ENCODE measurements at regions of chr7 and their contacts with region 1.

Region 1: GRCh38 chr7:134432296-134433152 is 26.4 kb downstream of the AKR1B1 start:
- DNase-seq: peak; percentile 99 to 100
- ATAC-seq: peak; percentile 92 to 96
- H3K4me3 ChIP-seq: peak overlapping the region; percentile 46
- H3K27ac ChIP-seq: peak overlapping the region; percentile 79 to 88
- H3K4me1 ChIP-seq: peaks cover 30% of the 10 kb centered on the region
- CTCF ChIP-seq: peak; percentile 100
- EP300 ChIP-seq: no peak
- POLR2A ChIP-seq: no peak; the same call in 1 of the 2 replicates
- RAD21 ChIP-seq: peak; percentile 100

Region 2: DNA sequence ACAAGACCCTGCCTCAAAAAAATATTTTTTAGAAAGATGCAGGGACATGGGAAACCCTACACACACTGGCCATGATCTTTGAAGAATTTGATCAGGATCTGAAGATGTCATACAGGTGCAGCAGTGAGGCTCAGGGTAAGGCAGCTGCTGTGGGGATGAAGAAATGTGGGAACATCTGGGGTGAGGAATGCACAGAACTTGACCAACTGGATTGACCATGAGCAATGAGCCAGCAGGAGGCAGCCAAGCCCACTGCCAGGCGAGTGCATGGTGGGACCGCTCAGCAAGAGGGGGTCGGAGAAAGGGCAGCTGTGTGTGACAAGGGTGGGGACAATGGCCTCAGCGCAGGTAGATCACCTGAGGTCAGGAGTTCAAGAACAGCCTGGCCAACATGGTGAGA is 28.8 kb before region 1 on chr7:
- CTCF ChIA-PET with region 1: interaction called, 11 read pairs
- POLR2A ChIA-PET with region 1: no interaction called
- DNase-seq: no peak
- ATAC-seq: no peak
- H3K4me3 ChIP-seq: no peak overlapping the region
- H3K27ac ChIP-seq: no peak overlapping the region
- H3K4me1 ChIP-seq: no peaks in the 10 kb centered on the region
- CTCF ChIP-seq: no peak
- EP300 ChIP-seq: no peak
- POLR2A ChIP-seq: no peak
- RAD21 ChIP-seq: no peak

Region 3: GRCh38 chr7:134480736-134481135 is 48.2 kb after region 1 on chr7:
- CTCF ChIA-PET with region 1: interaction called, 142 read pairs
- POLR2A ChIA-PET with region 1: interaction called, 19 read pairs
- DNase-seq: peak; percentile 59 to 82
- ATAC-seq: peak; percentile 83 to 86
- H3K4me3 ChIP-seq: no peak overlapping the region
- H3K27ac ChIP-seq: peak overlapping the region; percentile 62 to 67
- H3K4me1 ChIP-seq: peaks cover 60% of the 10 kb centered on the region
- CTCF ChIP-seq: no peak
- EP300 ChIP-seq: no peak
- POLR2A ChIP-seq: no peak
- RAD21 ChIP-seq: peak; percentile 13 to 18; a peak in 1 of 5 replicates

Region 4: GRCh38 chr7:134527979-134528371 is 95.5 kb after region 1 on chr7:
- CTCF ChIA-PET with region 1: interaction called, 22 read pairs
- POLR2A ChIA-PET with region 1: interaction called, 8 read pairs
- DNase-seq: no peak
- ATAC-seq: peak in 1 of 2 experiments; percentile 9; a peak in 4 of 6 replicates
- H3K4me3 ChIP-seq: peak overlapping the region; percentile 84
- H3K27ac ChIP-seq: peak overlapping the region; percentile 91 to 98
- H3K4me1 ChIP-seq: peaks cover 54% of the 10 kb centered on the region
- CTCF ChIP-seq: no peak
- EP300 ChIP-seq: no peak
- POLR2A ChIP-seq: no peak; the same call in 1 of the 2 replicates
- RAD21 ChIP-seq: no peak

Region 5: GRCh38 chr7:134605973-134606923 is 173.7 kb after region 1 on chr7:
- CTCF ChIA-PET with region 1: interaction called, 124 read pairs
- POLR2A ChIA-PET with region 1: interaction called, 6 read pairs
- DNase-seq: peak; percentile 62 to 81
- ATAC-seq: peak; percentile 89 to 94
- H3K4me3 ChIP-seq: no peak overlapping the region
- H3K27ac ChIP-seq: peak overlapping the region; percentile 64 to 82
- H3K4me1 ChIP-seq: peaks cover 47% of the 10 kb centered on the region
- CTCF ChIP-seq: peak; percentile 99
- EP300 ChIP-seq: no peak; a peak in 1 of 5 replicates
- POLR2A ChIP-seq: no peak
- RAD21 ChIP-seq: peak; percentile 100

Region 6: GRCh38 chr7:134646425-134647305 is 214.1 kb after region 1 on chr7 and contains the start of gene BPGM:
- CTCF ChIA-PET with region 1: interaction called, 19 read pairs
- POLR2A ChIA-PET with region 1: interaction called, 6 read pairs
- DNase-seq: peak; percentile 100
- ATAC-seq: peak; percentile 99 to 100
- H3K4me3 ChIP-seq: peak within 1 kb of the TSS; percentile 76
- H3K27ac ChIP-seq: peak within 1 kb of the TSS; percentile 83 to 84
- H3K4me1 ChIP-seq: peaks cover 9% of the 10 kb centered on the region; the same call in 2 of the 3 replicates
- CTCF ChIP-seq: peak; percentile 61
- EP300 ChIP-seq: no peak
- POLR2A ChIP-seq: peak; percentile 94
- RAD21 ChIP-seq: no peak
- polyA plus RNA-seq, gene BPGM: 21.2 and 28.3 TPM in 2 replicates

Region 7: GRCh38 chr7:134726581-134726980 is 294.1 kb after region 1 on chr7:
- CTCF ChIA-PET with region 1: no interaction called
- POLR2A ChIA-PET with region 1: no interaction called
- DNase-seq: no peak
- ATAC-seq: no peak
- H3K4me3 ChIP-seq: no peak overlapping the region
- H3K27ac ChIP-seq: no peak overlapping the region
- H3K4me1 ChIP-seq: no peaks in the 10 kb centered on the region
- CTCF ChIP-seq: no peak
- EP300 ChIP-seq: no peak
- POLR2A ChIP-seq: no peak
- RAD21 ChIP-seq: no peak

Measured in A549 (cell line).